B cell (primary cell): ENCODE measurements at regions of chr13 and their contacts with region 1.

Region 1: DNA sequence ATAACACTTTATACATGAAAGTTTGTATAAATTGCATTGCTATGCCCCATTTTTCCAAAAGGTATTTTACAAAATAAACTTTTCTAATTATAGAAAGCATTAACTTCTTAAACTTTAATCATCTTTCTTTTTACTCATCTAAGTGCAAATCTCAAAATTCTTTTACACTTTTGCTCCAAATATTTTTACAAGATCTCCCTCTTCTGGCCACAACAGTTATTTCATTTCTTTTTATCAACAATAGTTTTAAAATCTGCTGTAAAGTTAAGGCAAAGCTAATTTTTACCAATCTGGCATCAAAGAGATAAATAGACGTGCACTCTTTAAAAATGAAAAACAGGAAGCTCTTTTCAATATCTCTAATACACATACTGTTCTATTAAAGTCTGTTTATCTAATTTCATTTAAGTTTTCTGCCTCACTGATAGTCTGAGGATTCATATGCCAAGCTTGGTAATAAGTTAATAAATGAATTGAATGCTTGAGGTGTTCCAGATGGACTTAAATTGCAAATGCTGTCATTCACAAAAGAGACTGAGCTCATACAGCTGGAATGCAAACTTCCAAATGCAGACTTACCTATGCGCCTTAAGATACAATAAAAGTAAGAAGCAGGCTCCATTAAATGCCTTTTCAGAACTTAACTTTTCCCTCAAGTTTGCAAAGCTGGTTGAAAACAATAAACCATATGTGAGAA is 583.0 kb upstream of the ATXN8OS start:
- DNase-seq: no peak
- ATAC-seq: no peak
- H3K4me3 ChIP-seq: no peak overlapping the region
- H3K4me3 Mint-ChIP-seq: no peak overlapping the region
- H3K27ac ChIP-seq: no peak overlapping the region
- H3K27ac Mint-ChIP-seq: no peak overlapping the region
- H3K4me1 ChIP-seq: no peaks in the 10 kb centered on the region
- H3K4me1 Mint-ChIP-seq: no peaks in the 10 kb centered on the region
- H3K27me3 ChIP-seq: no peaks in the 10 kb centered on the region
- H3K27me3 Mint-ChIP-seq: no peaks in the 10 kb centered on the region
- CTCF ChIP-seq: no peak

Region 2: GRCh38 chr13:68304286-68304893 is 1220.2 kb before region 1 on chr13:
- CTCF ChIA-PET with region 1: interaction called, 3 read pairs
- POLR2A ChIA-PET with region 1: no interaction called
- intact Hi-C with region 1: loop called (anchors 5 kb)
- DNase-seq: peak; percentile 5
- ATAC-seq: no peak
- H3K4me3 ChIP-seq: no peak overlapping the region
- H3K4me3 Mint-ChIP-seq: no peak overlapping the region
- H3K27ac ChIP-seq: no peak overlapping the region
- H3K27ac Mint-ChIP-seq: no peak overlapping the region
- H3K4me1 ChIP-seq: no peaks in the 10 kb centered on the region
- H3K4me1 Mint-ChIP-seq: no peaks in the 10 kb centered on the region
- H3K27me3 ChIP-seq: no peaks in the 10 kb centered on the region
- H3K27me3 Mint-ChIP-seq: no peaks in the 10 kb centered on the region
- CTCF ChIP-seq: peak; percentile 58